GM18951 (cell line): ENCODE measurements at regions of chr10 and their contacts with region 1.

Region 1: DNA sequence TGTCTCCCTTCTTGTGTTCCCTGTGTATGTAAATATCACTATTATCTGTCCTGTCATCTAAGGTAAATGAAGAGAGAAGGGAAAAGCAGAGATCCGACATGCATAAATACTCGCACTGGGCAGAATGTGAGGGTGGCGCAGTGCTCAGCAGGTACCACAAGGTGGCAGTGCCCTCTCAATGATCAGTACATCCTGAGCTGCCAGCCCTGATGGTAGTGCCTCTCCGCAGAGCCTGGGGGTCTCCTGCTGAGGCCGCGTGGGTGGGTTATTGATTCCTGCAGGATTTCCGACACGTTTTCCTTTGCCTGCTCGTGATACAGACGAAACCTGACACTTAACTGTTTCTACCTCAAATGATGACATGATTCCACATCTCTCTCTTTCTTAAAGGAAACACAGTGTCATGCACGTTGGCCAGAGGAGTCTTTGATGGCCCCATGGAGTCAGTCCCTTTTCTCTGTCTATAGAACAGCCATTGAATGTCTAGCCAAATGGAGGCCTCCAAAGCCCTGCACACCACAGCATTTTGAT is 19.8 kb downstream of the RGR start:
- POLR2A ChIP-seq: no peak

Region 2: DNA sequence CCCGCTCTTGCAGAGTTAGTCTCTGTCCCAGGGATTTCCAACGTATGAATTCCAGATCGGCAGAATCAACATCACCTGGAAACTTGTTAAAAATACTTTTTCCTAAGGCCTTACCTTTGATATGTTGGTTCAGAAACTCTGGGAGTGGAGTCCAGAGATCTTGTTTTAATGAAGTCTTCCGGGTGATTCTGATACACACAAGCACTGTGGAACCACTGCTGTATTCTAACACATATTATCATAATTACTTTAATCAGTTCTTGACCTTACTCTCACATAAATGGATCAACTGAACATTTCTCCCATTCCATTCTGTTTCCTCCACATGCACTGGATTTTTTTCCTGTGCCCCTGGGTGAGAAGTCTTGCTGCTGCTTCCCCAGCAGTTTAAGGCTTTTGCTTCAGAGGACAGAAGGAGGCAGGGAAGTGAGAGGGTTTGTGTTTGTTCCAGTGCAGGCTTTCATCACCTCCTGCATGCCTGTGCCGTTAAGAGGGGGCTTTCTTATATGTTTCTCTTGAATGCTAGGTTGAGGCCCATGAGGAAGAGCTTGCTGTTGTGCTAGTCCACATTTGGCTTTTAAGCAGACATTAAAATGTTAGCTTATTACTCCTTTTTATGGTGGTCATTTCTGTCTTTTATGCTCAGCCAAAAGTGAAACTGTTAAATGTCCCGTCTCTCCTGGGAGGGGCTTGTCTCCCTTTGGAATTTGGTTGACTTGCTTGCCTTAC is 96.1 kb after region 1 on chr10:
- in situ Hi-C with region 1: loop called (anchors 10 kb)
- POLR2A ChIP-seq: no peak

Region 3: DNA sequence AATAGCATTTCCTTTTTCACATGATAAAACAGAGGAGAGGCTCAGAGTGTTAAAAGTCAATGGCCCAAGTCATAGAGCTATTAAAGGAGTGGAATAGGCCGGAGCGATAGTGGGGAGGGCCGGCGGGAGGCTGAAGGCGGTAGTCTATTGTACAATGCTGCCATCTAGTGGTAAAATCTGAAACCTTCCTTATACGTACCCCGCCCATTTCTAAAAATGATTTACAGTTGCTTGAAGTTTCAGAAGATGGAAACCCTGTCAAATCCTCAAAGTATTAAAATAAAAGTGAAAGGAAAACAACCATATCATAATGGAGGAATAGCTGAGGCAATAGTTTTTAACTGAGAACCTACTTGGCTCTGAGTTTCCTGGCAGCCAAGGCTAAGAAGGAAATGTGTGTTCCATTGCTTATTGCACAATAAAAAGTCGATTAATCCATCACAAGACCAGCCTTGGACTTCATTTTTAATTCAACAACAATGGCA is 272.8 kb after region 1 on chr10:
- in situ Hi-C with region 1: loop called (anchors 10 kb)
- POLR2A ChIP-seq: no peak